ENCODE measurements at regions of chr4 and their contacts with region 1.

Region 1: GRCh38 chr4:47836641-47837093 is 1.2 kb downstream of the CORIN start:
- DNase-seq: peak; percentile 83
- ATAC-seq: peak; percentile 89
- H3K4me3 ChIP-seq: peak overlapping the region; percentile 87
- H3K27ac ChIP-seq: no peak overlapping the region
- H3K4me1 ChIP-seq: 0 out of 2 replicates have a peak, but pooled peaks cover 5% of the 10 kb centered on the region
- H3K27me3 ChIP-seq: no peaks in the 10 kb centered on the region
- CTCF ChIP-seq: peak; percentile 67

Region 2: DNA sequence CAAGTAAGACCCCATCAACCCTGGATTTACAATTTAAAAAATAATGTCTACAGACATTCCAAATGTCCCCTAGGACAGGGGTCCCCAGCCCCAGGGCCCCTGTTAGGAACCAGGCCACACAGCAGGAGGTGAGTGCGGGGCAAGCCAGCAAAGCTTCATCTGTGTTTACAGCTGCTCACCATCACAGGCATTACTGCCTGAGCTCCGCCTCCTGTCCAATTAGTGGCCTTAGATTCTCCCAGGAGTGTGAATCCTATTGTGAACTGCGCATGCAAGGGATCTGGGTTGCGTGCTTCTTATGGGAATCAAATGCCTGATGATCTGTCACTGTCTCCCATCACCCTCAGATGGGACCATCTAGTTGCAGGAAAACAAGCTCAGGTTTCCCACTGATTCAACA is 205.5 kb before region 1 on chr4:
- CTCF ChIA-PET with region 1: no interaction called
- POLR2A ChIA-PET with region 1: no interaction called
- intact Hi-C with region 1: no loop called
- DNase-seq: no peak
- ATAC-seq: no peak
- H3K4me3 ChIP-seq: no peak overlapping the region
- H3K27ac ChIP-seq: no peak overlapping the region
- H3K4me1 ChIP-seq: no peaks in the 10 kb centered on the region
- H3K27me3 ChIP-seq: no peaks in the 10 kb centered on the region
- CTCF ChIP-seq: no peak

Region 3: DNA sequence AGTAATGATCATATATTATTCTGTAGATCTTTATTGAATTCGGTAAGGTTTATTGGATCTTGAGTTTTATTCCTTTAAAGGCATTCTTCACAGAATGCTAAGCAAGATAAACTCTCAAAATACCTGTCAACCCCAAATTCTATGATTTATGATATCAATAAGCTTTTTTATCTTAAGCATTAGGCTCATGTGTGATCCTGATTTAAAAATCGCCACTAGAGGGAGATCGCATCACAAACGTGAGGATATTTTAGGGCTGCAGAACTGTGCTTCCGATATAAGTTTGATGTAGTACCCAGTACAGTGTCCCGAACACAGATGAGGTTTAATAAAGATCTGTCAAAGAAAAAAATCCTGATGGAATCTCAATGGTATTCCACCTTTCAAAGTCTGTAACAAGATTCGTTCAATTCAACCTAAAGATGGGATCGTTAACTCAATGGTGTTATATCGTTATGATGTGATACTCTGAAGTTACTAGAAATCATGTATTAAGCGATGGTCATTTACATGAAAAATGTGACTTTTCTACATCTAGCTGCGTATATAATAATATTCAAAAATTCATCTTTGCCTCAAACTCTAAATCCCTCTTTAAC is 167.8 kb before region 1 on chr4:
- CTCF ChIA-PET with region 1: interaction called, 12 read pairs
- POLR2A ChIA-PET with region 1: no interaction called
- intact Hi-C with region 1: loop called (anchors 1 kb)
- DNase-seq: peak; percentile 62
- ATAC-seq: no peak
- H3K4me3 ChIP-seq: no peak overlapping the region
- H3K27ac ChIP-seq: no peak overlapping the region
- H3K4me1 ChIP-seq: no peaks in the 10 kb centered on the region
- H3K27me3 ChIP-seq: no peaks in the 10 kb centered on the region; the same call in 1 of the 2 replicates
- CTCF ChIP-seq: peak; percentile 77

Region 4: GRCh38 chr4:47686294-47686872 is 150.3 kb before region 1 on chr4:
- CTCF ChIA-PET with region 1: interaction called, 4 read pairs
- POLR2A ChIA-PET with region 1: no interaction called
- intact Hi-C with region 1: loop called (anchors 5 kb)
- DNase-seq: peak; percentile 58
- ATAC-seq: peak; percentile 60
- H3K4me3 ChIP-seq: no peak overlapping the region
- H3K27ac ChIP-seq: no peak overlapping the region
- H3K4me1 ChIP-seq: no peaks in the 10 kb centered on the region
- H3K27me3 ChIP-seq: peaks cover 24% of the 10 kb centered on the region
- CTCF ChIP-seq: peak; percentile 85

Region 5: DNA sequence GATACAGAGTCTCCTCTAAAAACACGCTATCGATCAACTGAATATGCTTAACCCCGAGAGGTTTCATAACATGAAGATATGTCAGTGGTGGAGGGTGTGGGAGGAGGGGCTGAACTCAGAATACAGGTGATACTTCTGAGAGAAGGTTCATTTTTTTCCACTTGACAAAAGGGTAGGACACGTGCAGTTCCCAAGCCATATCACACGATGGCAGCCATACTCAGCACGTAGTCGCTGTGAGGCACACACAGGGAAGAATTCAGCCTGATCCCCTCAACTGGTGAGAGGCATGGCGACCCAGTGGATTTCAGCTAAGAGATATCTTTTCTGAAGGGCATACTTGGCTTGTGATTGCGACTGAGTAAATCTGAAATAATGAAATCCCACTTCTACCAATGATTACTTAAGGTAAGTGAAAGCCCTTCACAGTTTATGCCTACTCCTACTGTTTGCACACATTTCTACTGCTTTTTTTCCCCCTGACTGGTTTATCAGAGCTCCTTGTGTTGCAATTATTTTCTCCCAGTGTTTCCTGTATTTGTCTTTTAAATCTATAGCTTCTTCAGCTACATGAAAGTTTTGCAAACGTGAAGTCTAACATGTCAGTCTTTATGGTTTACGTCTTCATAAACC is 131.9 kb before region 1 on chr4:
- CTCF ChIA-PET with region 1: interaction called, 19 read pairs
- POLR2A ChIA-PET with region 1: no interaction called
- intact Hi-C with region 1: loop called (anchors 1 kb)
- DNase-seq: peak; percentile 38
- ATAC-seq: peak; percentile 80
- H3K4me3 ChIP-seq: no peak overlapping the region
- H3K27ac ChIP-seq: no peak overlapping the region
- H3K4me1 ChIP-seq: no peaks in the 10 kb centered on the region
- H3K27me3 ChIP-seq: 0 out of 2 replicates have a peak, but pooled peaks cover 3% of the 10 kb centered on the region
- CTCF ChIP-seq: peak; percentile 54

Measured in PC-3 (cell line).